CD8-positive, alpha-beta T cell (primary cell): ENCODE measurements at regions of chr19 and their contacts with region 1.

Region 1: DNA sequence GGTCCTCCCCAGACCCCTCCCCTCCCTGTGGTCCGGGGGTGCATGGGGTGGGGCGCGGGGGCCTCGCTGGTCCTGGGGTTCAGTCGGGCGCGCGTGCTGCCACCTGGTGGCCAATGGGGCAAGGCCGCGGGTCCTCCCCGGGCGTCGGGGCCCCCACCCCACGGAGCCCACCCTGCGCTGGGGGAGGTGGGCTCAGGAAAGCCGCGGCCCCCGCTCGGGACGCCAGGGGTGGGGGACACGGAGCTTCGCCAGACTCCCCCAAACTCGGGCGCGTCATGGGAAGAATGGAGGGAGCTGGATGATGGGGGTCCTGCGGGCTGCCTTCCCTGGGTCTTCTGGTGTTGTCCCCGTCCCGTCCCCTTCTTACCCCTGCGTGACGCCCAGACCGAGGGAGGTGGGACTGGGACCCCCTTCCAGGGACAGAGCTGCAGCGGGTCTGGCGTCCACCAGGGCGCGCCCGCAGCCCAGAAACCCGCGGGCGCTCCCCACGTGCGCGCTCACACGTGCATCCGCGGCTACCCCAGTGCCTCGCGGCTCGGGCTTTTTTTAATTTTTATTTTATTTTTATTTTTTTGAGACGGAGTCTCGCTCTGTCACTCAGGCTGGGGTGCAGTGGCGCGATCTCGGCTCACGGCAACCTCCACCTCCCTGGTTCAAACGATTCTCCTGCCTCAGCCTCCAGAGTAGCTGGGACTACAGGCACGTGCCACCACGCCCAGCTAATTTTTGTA is 19.8 kb upstream of the TCF3 start:
- DNase-seq: peak in 8 of 9 experiments; percentile 46 to 78 (median 66)
- ATAC-seq: peak; percentile 66
- H3K4me3 ChIP-seq: peak overlapping the region; percentile 20 to 30
- H3K4me3 Mint-ChIP-seq: no peak overlapping the region
- H3K27ac ChIP-seq: no peak overlapping the region
- H3K27ac Mint-ChIP-seq: no peak overlapping the region
- H3K4me1 ChIP-seq: peaks cover 19% of the 10 kb centered on the region
- H3K4me1 Mint-ChIP-seq: peaks cover 16% of the 10 kb centered on the region
- H3K27me3 ChIP-seq: peaks cover 22 to 50% of the 10 kb centered on the region in 2 experiments
- H3K27me3 Mint-ChIP-seq: peaks cover 48% of the 10 kb centered on the region
- CTCF ChIP-seq: peak; percentile 94

Region 2: GRCh38 chr19:1540365-1540925 is 131.8 kb before region 1 on chr19:
- CTCF ChIA-PET with region 1: interaction called, 70 read pairs
- POLR2A ChIA-PET with region 1: no interaction called
- intact Hi-C with region 1: no loop called
- DNase-seq: no peak
- ATAC-seq: no peak
- H3K4me3 ChIP-seq: no peak overlapping the region
- H3K4me3 Mint-ChIP-seq: no peak overlapping the region
- H3K27ac ChIP-seq: no peak overlapping the region
- H3K27ac Mint-ChIP-seq: no peak overlapping the region
- H3K4me1 ChIP-seq: no peaks in the 10 kb centered on the region
- H3K4me1 Mint-ChIP-seq: no peaks in the 10 kb centered on the region
- H3K27me3 ChIP-seq: peaks cover under 1 to 7% of the 10 kb centered on the region in 2 experiments
- H3K27me3 Mint-ChIP-seq: peaks cover 25% of the 10 kb centered on the region
- CTCF ChIP-seq: no peak

Region 3: GRCh38 chr19:1592755-1593500 is 79.3 kb before region 1 on chr19 and contains the start of gene MBD3:
- CTCF ChIA-PET with region 1: interaction called, 9 read pairs
- POLR2A ChIA-PET with region 1: no interaction called
- intact Hi-C with region 1: loop called in 1 of 2 experiments (anchors 5 kb)
- DNase-seq: peak; percentile 72 to 95 (median 84)
- ATAC-seq: peak; percentile 89
- H3K4me3 ChIP-seq: peak within 1 kb of the TSS; percentile 80 to 95
- H3K4me3 Mint-ChIP-seq: peak within 1 kb of the TSS; percentile 88
- H3K27ac ChIP-seq: peak within 1 kb of the TSS; percentile 84 to 88
- H3K27ac Mint-ChIP-seq: peak within 1 kb of the TSS; percentile 91
- H3K4me1 ChIP-seq: peaks cover 18% of the 10 kb centered on the region
- H3K4me1 Mint-ChIP-seq: peaks cover 22% of the 10 kb centered on the region
- H3K27me3 ChIP-seq: no peaks in the 10 kb centered on the region
- H3K27me3 Mint-ChIP-seq: no peaks in the 10 kb centered on the region
- CTCF ChIP-seq: no peak
- total RNA-seq, gene MBD3: 31.0 to 37.2 TPM

Region 4: DNA sequence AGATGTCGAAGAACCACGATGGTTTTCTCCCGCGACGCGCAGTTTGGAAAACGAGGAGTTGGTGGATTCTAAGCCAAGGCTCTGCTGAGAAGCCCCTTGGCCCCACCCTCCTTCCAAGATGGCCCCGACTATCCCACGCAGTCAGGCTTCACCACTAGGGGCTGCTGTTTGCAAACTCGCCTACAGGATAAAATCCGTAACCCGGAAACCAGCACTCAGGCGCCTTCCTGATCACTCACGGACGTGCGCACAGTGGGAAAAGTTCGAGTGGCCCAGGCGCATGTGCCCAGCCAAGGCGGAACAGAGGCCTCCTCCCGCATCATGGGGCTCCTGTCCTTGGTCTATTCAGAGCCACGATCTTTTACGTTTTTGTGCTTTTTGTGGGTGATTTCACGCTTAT is 47.7 kb before region 1 on chr19:
- CTCF ChIA-PET with region 1: interaction called, 8 read pairs
- POLR2A ChIA-PET with region 1: no interaction called
- intact Hi-C with region 1: loop called (anchors 2 kb)
- DNase-seq: peak; percentile 22 to 73 (median 61)
- ATAC-seq: peak; percentile 82
- H3K4me3 ChIP-seq: no peak overlapping the region
- H3K4me3 Mint-ChIP-seq: no peak overlapping the region
- H3K27ac ChIP-seq: no peak overlapping the region
- H3K27ac Mint-ChIP-seq: no peak overlapping the region
- H3K4me1 ChIP-seq: no peaks in the 10 kb centered on the region
- H3K4me1 Mint-ChIP-seq: peaks cover 7% of the 10 kb centered on the region
- H3K27me3 ChIP-seq: no peaks in the 10 kb centered on the region
- H3K27me3 Mint-ChIP-seq: no peaks in the 10 kb centered on the region
- CTCF ChIP-seq: peak; percentile 47

Region 5: DNA sequence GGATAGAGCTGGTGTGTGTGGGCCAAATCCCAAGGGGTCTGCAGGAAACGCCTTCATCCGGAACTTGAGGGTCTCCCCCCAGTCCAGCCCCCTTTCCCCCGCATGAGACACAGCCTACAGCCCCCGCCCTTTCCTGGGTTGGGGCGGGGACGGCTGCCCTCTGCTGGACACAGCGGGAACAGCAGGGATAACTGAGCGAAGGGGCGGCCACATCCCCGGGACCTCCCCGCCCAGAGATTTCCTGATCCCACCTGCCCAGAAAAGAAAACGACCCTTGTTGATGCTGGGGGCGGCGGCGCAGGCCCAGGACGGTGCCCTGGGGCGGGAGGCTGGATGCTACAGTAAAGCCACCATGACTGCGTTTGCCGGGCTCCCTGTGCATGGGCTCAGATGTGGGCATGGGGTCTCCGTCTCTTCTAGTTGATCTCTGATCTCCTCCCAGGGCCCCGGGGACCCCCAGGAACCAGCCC is 95.3 kb after region 1 on chr19:
- CTCF ChIA-PET with region 1: interaction called, 6 read pairs
- POLR2A ChIA-PET with region 1: no interaction called
- intact Hi-C with region 1: loop called in 1 of 2 experiments (anchors 2 kb)
- DNase-seq: peak; percentile 37 to 80 (median 63)
- ATAC-seq: peak; percentile 95
- H3K4me3 ChIP-seq: no peak overlapping the region
- H3K4me3 Mint-ChIP-seq: no peak overlapping the region
- H3K27ac ChIP-seq: no peak overlapping the region
- H3K27ac Mint-ChIP-seq: no peak overlapping the region
- H3K4me1 ChIP-seq: no peaks in the 10 kb centered on the region
- H3K4me1 Mint-ChIP-seq: no peaks in the 10 kb centered on the region
- H3K27me3 ChIP-seq: peaks cover 17 to 61% of the 10 kb centered on the region in 2 experiments
- H3K27me3 Mint-ChIP-seq: peaks cover 69% of the 10 kb centered on the region
- CTCF ChIP-seq: peak; percentile 85